Panc1 (cell line): ENCODE measurements at regions of chr2 and their contacts with region 1.

Region 1: DNA sequence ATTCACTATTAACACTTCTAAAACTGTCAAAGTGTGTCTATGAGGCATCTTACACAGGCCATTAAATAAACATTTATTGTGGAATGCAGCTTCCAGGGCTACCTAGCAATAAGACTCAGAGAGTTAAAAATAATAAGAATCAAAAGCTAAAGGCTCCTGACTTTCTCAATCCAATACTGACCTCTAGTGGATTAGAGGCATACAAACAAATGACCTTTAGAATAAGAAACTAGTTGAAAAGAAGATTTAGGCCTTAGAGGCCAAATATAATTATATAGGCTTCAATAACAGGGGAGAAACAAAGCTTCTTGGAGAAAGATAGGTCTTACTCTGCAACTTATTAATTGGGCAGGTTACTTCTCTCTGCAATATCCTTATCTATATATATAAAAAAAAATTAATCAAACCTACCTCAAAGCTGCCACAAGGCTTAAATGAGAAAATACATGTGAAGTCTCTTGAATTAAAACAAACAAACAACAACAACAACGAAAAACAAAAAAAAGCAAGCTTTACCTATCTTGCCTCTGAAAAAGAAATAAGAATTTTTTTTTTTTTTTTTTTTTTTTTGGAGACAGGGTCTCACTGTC is 246.1 kb downstream of the EXOC6B start:
- DNase-seq: no peak
- ATAC-seq: no peak
- H3K4me3 ChIP-seq: no peak overlapping the region
- H3K27ac ChIP-seq: no peak overlapping the region
- H3K4me1 ChIP-seq: no peaks in the 10 kb centered on the region
- H3K27me3 ChIP-seq: no peaks in the 10 kb centered on the region
- CTCF ChIP-seq: peak; percentile 62; the same call in 1 of the 2 replicates

Region 2: GRCh38 chr2:71923887-71924533 is 655.7 kb before region 1 on chr2:
- CTCF ChIA-PET with region 1: interaction called, 7 read pairs
- POLR2A ChIA-PET with region 1: no interaction called
- in situ Hi-C with region 1: no loop called
- intact Hi-C with region 1: loop called (anchors 10 kb)
- DNase-seq: peak; percentile 61
- ATAC-seq: peak; percentile 90
- H3K4me3 ChIP-seq: no peak overlapping the region
- H3K27ac ChIP-seq: no peak overlapping the region
- H3K4me1 ChIP-seq: no peaks in the 10 kb centered on the region
- H3K27me3 ChIP-seq: no peaks in the 10 kb centered on the region
- CTCF ChIP-seq: peak; percentile 87

Region 3: DNA sequence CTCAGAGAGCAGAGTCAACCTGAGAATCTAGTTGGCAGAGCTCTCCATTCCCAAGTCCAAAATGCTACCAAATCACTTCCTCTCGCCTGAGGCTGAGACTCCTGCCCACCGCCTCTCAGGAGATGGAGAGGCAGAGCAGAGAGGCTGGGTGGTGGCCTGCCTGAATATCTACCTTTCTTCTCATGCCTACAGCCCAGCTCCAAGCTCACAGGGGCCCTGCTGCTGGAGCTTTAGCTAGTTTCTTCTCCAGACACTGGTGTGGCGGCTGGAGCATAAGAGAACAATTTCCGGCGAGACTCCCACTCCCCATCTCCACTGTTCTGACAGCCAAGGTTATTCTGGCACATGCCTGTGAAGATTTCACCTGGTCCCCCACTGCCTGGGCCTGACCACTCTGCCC is 423.9 kb before region 1 on chr2:
- CTCF ChIA-PET with region 1: interaction called, 11 read pairs
- POLR2A ChIA-PET with region 1: no interaction called
- in situ Hi-C with region 1: no loop called
- intact Hi-C with region 1: loop called (anchors 5 kb)
- DNase-seq: no peak
- ATAC-seq: no peak
- H3K4me3 ChIP-seq: no peak overlapping the region
- H3K27ac ChIP-seq: no peak overlapping the region
- H3K4me1 ChIP-seq: no peaks in the 10 kb centered on the region
- H3K27me3 ChIP-seq: 0 out of 2 replicates have a peak, but pooled peaks cover 2% of the 10 kb centered on the region
- CTCF ChIP-seq: no peak

Region 4: GRCh38 chr2:72694715-72695496 is 115.2 kb after region 1 on chr2:
- CTCF ChIA-PET with region 1: no interaction called
- POLR2A ChIA-PET with region 1: no interaction called
- in situ Hi-C with region 1: no loop called
- intact Hi-C with region 1: no loop called
- DNase-seq: no peak
- ATAC-seq: no peak
- H3K4me3 ChIP-seq: no peak overlapping the region
- H3K27ac ChIP-seq: no peak overlapping the region
- H3K4me1 ChIP-seq: peaks cover 4% of the 10 kb centered on the region
- H3K27me3 ChIP-seq: no peaks in the 10 kb centered on the region
- CTCF ChIP-seq: no peak

Region 5: DNA sequence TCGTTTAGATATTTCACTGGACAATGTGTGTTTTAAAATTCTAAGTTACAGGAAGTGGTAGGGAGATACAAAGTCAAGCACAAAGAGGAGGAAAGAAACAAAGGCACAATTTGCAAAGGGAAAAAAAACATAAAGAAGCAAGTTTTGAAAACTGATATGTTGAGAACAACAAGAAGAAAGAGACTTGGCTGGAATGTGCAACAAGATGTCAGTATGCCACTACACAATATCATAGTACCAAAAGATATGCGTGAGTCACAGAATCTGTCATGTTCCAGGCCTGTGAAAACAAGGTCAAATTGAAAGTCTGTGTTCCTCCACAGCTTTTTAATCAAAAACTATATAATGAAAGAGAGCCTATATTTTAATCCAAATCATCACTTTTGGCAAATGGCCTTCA is 234.2 kb after region 1 on chr2:
- CTCF ChIA-PET with region 1: no interaction called
- POLR2A ChIA-PET with region 1: no interaction called
- in situ Hi-C with region 1: no loop called
- intact Hi-C with region 1: no loop called
- DNase-seq: no peak
- ATAC-seq: no peak
- H3K4me3 ChIP-seq: no peak overlapping the region
- H3K27ac ChIP-seq: no peak overlapping the region
- H3K4me1 ChIP-seq: no peaks in the 10 kb centered on the region
- H3K27me3 ChIP-seq: no peaks in the 10 kb centered on the region
- CTCF ChIP-seq: no peak